ENCODE measurements at regions of chr12 and their contacts with region 1.

Region 1: DNA sequence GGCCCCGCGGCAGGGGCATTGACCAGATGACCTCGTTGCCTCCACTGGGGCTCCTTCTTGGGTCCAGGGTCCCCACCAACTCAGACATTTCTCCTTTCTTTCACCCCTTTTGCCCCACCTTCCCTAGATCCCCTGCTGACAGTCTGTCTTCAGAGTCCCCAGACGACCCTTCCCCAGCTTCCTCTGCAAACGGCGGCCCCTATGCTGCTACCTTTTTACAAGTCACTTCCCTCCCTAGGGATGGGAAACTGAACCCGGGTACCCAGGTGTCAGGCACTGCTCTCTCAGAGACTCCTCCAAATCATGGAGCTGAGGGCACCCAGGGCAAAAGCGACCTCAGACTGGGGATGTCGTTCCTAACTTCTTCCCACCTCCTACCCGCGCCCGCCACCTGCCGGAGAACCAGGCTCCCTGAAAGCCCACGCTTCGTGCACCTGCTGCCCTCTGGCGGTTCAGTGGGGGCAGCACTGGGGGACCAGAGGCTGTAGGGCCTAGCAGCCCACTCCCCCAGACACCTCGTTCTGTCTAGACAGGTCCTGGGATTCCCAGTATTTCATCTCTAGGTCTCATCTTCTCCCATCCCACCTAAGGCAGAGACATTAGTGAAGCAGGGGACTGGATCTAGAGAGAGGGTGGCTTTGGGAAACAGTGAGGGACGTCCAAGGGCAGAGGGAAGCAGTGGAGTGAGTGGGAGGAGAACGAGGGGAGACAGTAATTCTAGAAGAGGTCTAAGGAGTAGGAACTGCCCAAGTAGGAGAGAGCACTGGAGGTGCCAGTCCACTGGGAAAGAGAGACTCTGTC is 4.9 kb downstream of the ZNF385A start:
- DNase-seq: peak; percentile 93
- ATAC-seq: peak; percentile 94
- H3K4me3 Mint-ChIP-seq: peak overlapping the region; percentile 42
- H3K27ac Mint-ChIP-seq: no peak overlapping the region
- H3K4me1 Mint-ChIP-seq: peaks cover 11% of the 10 kb centered on the region
- H3K27me3 Mint-ChIP-seq: no peaks in the 10 kb centered on the region
- CTCF ChIP-seq: peak; percentile 100

Region 2: GRCh38 chr12:54229624-54230212 is 149.9 kb before region 1 on chr12:
- CTCF ChIA-PET with region 1: interaction called, 11 read pairs
- POLR2A ChIA-PET with region 1: no interaction called
- intact Hi-C with region 1: no loop called
- DNase-seq: no peak
- ATAC-seq: no peak
- H3K4me3 Mint-ChIP-seq: no peak overlapping the region
- H3K27ac Mint-ChIP-seq: no peak overlapping the region
- H3K4me1 Mint-ChIP-seq: no peaks in the 10 kb centered on the region
- H3K27me3 Mint-ChIP-seq: no peaks in the 10 kb centered on the region
- CTCF ChIP-seq: no peak

Region 3: GRCh38 chr12:54300732-54301427 is 78.7 kb before region 1 on chr12 and contains the start of gene NFE2:
- CTCF ChIA-PET with region 1: interaction called, 79 read pairs
- POLR2A ChIA-PET with region 1: no interaction called
- intact Hi-C with region 1: no loop called
- DNase-seq: peak; percentile 55
- ATAC-seq: peak; percentile 69
- H3K4me3 Mint-ChIP-seq: no peak within 1 kb of the TSS
- H3K27ac Mint-ChIP-seq: no peak within 1 kb of the TSS
- H3K4me1 Mint-ChIP-seq: peaks cover 10% of the 10 kb centered on the region
- H3K27me3 Mint-ChIP-seq: peaks cover 45% of the 10 kb centered on the region
- CTCF ChIP-seq: no peak
- total RNA-seq, gene NFE2: not detected

Region 4: GRCh38 chr12:54352022-54352531 is 27.5 kb before region 1 on chr12:
- CTCF ChIA-PET with region 1: interaction called, 47 read pairs
- POLR2A ChIA-PET with region 1: no interaction called
- intact Hi-C with region 1: no loop called
- DNase-seq: peak; percentile 73
- ATAC-seq: peak; percentile 81
- H3K4me3 Mint-ChIP-seq: peak overlapping the region; percentile 43
- H3K27ac Mint-ChIP-seq: peak overlapping the region; percentile 44
- H3K4me1 Mint-ChIP-seq: peaks cover 15% of the 10 kb centered on the region
- H3K27me3 Mint-ChIP-seq: no peaks in the 10 kb centered on the region
- CTCF ChIP-seq: no peak

Region 5: DNA sequence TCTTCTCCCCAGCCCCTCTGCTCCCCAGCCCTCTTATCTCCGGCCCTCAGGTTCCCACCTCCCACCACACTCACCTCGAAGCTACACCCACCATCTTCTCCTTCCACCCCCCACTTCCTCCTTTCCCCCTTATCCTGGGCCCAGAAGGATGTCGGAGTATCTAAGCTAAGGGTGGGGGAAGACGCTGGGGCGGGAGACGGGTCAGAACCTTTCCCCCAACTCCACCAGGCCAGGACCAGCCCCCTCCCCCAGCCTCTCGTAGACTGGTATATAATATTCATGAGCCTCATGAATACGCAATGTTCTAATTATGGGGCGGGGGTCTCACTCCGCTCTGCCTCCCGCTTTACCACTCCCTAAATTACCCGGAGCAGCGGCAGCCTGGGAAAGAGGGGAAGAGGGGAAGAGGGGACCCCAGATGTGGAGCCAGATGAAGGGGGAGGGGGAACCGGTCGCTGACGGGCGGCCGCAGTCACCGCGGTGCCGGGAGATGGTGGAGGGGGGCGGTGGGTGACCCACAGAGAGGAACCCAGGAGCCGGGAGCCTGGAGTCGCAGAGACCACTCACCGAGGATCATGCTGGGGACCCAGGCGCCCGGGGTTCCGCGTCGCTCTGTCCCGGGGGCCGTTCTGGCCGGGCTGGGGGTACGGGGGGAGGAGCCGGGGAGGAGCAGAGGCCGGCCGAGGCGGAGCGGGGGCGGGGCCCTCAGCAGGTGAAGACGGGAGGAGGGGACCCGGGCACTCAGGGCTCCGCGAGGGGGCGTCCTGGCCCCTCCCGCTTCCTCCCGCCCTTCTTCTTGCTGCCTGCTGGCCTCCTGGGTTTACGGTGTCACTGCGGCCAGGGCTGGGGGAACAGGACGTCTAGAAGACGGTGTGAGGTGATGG is 11.3 kb after region 1 on chr12:
- CTCF ChIA-PET with region 1: interaction called, 18 read pairs
- POLR2A ChIA-PET with region 1: interaction called, 3 read pairs
- intact Hi-C with region 1: no loop called
- DNase-seq: peak; percentile 84
- ATAC-seq: peak; percentile 91
- H3K4me3 Mint-ChIP-seq: peak overlapping the region; percentile 58
- H3K27ac Mint-ChIP-seq: no peak overlapping the region
- H3K4me1 Mint-ChIP-seq: peaks cover 27% of the 10 kb centered on the region
- H3K27me3 Mint-ChIP-seq: no peaks in the 10 kb centered on the region
- CTCF ChIP-seq: no peak

Region 6: DNA sequence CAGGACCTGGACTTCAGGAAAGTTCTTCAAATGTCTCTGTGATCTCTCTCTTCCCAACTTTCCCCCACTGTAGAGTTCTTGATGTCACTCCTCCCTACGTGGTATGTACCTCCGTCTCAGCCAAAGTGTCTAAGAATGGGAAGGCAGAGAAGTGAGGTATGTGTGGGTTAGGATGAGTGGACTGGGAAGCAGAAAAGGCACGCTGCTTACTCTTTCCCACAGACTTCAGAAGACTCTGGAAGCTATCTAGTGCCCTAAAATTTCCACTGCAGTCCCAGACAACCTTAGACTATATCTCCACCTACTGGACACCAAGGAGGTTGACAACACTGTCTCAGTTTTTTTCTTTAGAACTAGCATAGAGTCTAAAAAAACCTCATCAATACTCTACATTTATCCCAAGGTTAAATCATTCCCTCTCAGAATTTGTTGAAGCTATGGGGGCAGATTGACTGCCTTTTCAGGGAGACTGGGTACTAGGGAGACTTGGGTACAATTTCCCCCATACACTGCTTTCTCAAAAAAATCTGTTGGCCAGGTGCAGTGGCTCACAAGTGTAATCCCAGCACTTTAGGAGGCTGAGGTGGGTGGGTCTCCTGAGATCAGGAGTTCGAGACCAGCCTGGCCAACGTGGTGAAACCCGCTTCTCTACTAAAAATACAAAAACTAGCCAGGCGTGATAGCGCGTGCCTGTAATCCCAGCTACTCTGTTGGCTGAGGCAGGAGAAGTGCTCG is 60.1 kb after region 1 on chr12:
- CTCF ChIA-PET with region 1: interaction called, 42 read pairs
- POLR2A ChIA-PET with region 1: interaction called, 3 read pairs
- intact Hi-C with region 1: no loop called
- DNase-seq: no peak
- ATAC-seq: peak; percentile 88
- H3K4me3 Mint-ChIP-seq: no peak overlapping the region
- H3K27ac Mint-ChIP-seq: no peak overlapping the region
- H3K4me1 Mint-ChIP-seq: peaks cover 10% of the 10 kb centered on the region
- H3K27me3 Mint-ChIP-seq: no peaks in the 10 kb centered on the region
- CTCF ChIP-seq: peak; percentile 91

Measured in activated CD8-positive, alpha-beta T cell treated with anti-CD3 and anti-CD28 coated beads for 36 hours (primary cell).